ENCODE measurements at regions of chr1 and their contacts with region 1.

Region 1: DNA sequence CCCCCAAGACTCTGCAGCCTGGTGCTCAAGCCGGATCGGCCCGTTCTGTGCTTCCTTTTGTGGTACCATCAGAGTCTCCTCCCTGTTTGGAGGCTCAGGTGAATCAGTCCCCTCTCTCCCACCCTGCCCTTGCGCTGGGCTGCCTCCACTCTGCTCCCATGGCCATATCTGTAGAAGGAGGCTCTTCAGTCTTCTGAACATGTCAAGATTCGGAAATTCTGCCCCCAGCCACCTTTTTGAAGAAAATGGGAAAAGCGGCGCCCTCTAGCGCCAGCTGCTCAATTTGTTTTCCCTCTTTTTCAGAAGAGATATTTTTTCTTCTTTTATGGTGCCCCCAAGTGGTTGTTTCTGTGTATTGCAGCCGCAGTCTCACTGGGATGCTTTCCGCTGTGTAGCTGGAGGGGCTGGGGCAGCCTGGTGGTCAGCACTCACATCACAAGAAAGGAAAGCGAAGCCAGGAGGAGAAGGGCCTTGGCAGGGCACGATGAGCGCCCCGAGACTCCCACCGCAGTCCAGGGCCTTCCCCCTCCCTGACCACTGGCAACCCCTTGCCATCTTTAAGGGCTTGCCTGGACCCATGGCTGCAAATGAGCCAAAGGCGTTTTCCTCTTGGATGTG is 58.4 kb upstream of the CACNA1E start:
- DNase-seq: peak; percentile 76
- H3K4me3 ChIP-seq: no peak overlapping the region
- H3K27ac ChIP-seq: no peak overlapping the region
- H3K4me1 ChIP-seq: no peaks in the 10 kb centered on the region
- CTCF ChIP-seq: peak; percentile 100

Region 2: DNA sequence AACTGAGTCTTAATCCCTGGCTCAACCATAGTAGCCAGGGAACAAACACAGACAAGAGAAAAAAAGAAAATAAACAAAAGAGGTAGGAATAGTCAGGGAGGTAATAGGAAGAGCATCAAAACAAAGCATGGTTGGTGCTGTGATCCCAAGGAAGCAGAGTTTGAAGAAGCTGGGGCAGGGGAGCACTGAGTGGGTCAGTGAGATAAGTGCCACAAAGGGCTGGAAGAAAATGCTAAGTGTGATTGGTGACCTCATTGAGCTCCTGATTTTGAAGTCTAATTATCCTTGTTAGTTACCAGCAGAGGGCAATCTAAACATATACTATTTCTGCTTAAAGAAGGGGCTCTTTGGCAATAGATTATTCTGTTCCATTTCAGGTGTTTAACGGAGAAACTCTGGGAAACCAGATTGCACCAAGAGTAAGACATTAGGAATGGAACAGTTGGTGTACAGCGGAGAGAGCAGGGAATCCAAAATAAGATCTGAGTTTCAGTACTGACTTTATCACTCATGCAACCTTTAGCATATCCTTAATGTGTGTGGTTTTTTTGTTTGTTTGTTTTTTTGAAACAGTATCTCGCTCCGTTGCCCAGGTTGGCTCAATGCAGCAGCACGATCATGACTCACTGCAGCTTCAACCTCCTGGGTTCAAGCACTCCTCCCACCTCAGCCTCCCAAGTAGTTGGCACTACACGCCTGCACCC is 542.9 kb before region 1 on chr1:
- CTCF ChIA-PET with region 1: no interaction called
- POLR2A ChIA-PET with region 1: no interaction called
- intact Hi-C with region 1: loop called (anchors 5 kb)
- DNase-seq: peak; percentile 60
- H3K4me3 ChIP-seq: no peak overlapping the region
- H3K27ac ChIP-seq: no peak overlapping the region
- H3K4me1 ChIP-seq: no peaks in the 10 kb centered on the region
- CTCF ChIP-seq: peak; percentile 78

Region 3: GRCh38 chr1:180893614-180894013 is 531.3 kb before region 1 on chr1:
- CTCF ChIA-PET with region 1: no interaction called
- POLR2A ChIA-PET with region 1: no interaction called
- intact Hi-C with region 1: no loop called
- DNase-seq: no peak
- H3K4me3 ChIP-seq: no peak overlapping the region
- H3K27ac ChIP-seq: no peak overlapping the region
- H3K4me1 ChIP-seq: peaks cover 8% of the 10 kb centered on the region
- CTCF ChIP-seq: no peak

Region 4: GRCh38 chr1:181189691-181190363 is 235.1 kb before region 1 on chr1:
- CTCF ChIA-PET with region 1: no interaction called
- POLR2A ChIA-PET with region 1: no interaction called
- intact Hi-C with region 1: loop called (anchors 1 kb)
- DNase-seq: peak; percentile 41
- H3K4me3 ChIP-seq: no peak overlapping the region
- H3K27ac ChIP-seq: no peak overlapping the region
- H3K4me1 ChIP-seq: no peaks in the 10 kb centered on the region
- CTCF ChIP-seq: peak; percentile 95

Region 5: DNA sequence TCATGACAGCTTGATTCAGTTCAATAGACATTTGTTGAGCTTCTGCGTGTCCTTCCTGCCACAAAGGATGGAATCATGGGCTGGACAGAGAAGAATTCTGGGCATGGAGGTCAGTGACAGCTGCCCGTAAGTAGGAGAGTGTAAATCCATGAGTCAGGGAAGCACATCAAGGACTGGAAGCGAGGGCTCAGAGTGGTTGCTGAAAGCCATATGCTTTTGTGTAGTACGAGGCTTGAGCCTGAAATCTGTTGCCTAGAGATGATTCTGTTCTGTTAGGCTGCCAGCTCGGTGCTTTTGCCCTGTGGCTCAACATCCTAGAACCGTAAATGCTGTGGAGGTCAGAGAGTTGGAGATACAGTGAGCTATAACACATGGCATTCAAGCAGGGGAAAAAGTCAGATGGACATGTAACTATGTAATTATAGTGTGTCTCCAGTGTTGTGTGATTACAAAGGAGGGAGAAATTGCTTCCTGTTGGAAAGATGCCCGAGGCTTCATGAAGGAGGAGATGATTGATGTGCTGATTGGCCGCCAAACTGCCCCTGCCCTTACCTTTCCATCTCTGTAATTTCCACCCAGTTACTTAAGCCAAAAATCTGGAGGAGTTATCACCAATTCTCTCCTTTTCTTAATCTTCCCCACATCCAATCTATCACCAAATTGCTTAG is 34.4 kb before region 1 on chr1:
- CTCF ChIA-PET with region 1: no interaction called
- POLR2A ChIA-PET with region 1: no interaction called
- intact Hi-C with region 1: no loop called
- DNase-seq: no peak
- H3K4me3 ChIP-seq: no peak overlapping the region
- H3K27ac ChIP-seq: no peak overlapping the region
- H3K4me1 ChIP-seq: no peaks in the 10 kb centered on the region
- CTCF ChIP-seq: no peak

Region 6: GRCh38 chr1:181541947-181542346 is 117.1 kb after region 1 on chr1:
- CTCF ChIA-PET with region 1: no interaction called
- POLR2A ChIA-PET with region 1: no interaction called
- intact Hi-C with region 1: no loop called
- DNase-seq: no peak
- H3K4me3 ChIP-seq: no peak overlapping the region
- H3K27ac ChIP-seq: no peak overlapping the region
- H3K4me1 ChIP-seq: no peaks in the 10 kb centered on the region
- CTCF ChIP-seq: no peak

Measured in OCI-LY7 (cell line).